Posterior vena cava (tissue), 2 donors: ENCODE measurements at regions of chr10 and their contacts with region 1.

Region 1: GRCh38 chr10:79149662-79150443 is 81.1 kb downstream of the ZMIZ1 start:
- DNase-seq: peak; percentile 95

Region 2: GRCh38 chr10:78972947-78973900 is 176.6 kb before region 1 on chr10:
- intact Hi-C with region 1: loop called in 1 of 2 experiments (anchors 10 kb)
- DNase-seq: peak; percentile 92

Region 3: GRCh38 chr10:79230328-79230830 is 80.5 kb after region 1 on chr10:
- intact Hi-C with region 1: no loop called
- DNase-seq: no peak